ENCODE measurements at regions of chr5 and their contacts with region 1.

Region 1: DNA sequence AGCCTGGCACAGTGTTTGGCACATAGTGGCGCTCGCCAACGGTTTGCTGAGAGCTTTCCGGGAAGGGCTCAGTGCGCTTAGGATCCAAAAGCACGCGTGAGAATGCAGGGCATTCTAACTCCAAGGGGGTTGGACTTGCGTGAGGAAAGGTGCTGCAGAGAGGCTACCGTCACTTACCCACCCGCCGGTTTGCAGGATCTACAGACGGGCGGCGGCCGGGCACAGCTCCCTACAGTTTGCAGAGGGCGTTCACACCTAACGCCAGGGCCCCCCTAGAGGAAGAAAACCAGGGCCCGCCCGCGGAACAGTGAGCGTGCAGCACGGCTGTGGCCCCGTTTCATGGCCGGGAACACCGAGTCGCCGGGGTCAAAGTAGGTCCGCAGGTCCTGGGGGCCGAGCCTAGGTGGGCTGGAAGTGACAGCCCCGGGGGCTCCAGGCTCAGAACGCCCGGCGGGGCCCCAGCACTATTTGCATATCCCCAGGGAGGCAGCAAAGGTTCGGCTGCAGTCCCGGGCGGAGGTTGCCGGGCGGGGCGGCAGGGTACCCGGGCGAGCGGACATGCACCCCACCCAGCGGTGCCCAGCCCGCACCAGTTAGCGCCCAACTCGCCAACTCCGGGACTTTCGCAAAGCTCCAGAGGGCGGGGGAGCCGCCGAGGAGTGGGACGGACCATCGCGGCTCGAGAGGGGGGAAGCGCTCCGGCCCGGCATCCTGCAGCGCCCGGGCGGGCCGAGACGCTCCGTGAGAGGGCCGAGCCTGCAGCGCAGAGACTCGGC is 526 bp upstream of the GALNT10 start:
- DNase-seq: peak; percentile 86 to 91
- ATAC-seq: peak; percentile 93

Region 2: DNA sequence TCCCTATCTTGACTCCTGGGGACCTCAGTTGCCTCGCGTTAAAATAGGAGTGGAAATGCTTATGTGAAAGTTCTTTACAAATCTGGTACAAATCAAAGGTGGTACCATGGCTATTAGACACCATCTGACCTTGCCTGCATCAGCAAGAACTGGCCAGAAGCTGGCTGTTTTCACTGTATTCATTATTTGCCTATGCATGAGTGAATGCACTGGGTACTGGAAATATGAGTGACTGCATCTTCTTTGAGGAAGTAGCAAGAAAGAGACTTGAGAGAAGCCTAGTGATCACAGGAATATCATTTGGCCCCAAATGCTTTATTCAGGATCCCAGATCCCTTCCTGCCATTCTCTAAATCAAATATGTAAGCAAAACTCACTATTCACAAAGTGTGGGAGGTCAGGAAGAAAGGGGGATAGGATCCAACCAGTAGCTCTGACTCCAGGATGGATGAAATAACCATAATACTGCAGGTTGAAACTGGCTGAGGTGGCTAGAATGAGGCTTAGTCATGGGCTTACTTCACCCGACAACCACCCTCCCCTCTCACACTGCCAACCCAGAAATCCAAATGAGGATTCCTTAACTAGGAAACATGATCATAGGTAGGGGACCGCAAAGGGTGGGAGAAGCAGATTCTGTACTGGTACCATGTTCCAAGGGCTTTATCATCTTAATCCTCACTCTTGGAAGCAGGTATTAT is 208.0 kb before region 1 on chr5:
- intact Hi-C with region 1: loop called in 1 of 2 experiments (anchors 10 kb)
- DNase-seq: no peak
- ATAC-seq: no peak

Region 3: GRCh38 chr5:154405078-154405792 is 215.2 kb after region 1 on chr5:
- intact Hi-C with region 1: loop called in 1 of 2 experiments (anchors 10 kb)
- DNase-seq: peak; percentile 71 to 87
- ATAC-seq: peak; percentile 98

Region 4: DNA sequence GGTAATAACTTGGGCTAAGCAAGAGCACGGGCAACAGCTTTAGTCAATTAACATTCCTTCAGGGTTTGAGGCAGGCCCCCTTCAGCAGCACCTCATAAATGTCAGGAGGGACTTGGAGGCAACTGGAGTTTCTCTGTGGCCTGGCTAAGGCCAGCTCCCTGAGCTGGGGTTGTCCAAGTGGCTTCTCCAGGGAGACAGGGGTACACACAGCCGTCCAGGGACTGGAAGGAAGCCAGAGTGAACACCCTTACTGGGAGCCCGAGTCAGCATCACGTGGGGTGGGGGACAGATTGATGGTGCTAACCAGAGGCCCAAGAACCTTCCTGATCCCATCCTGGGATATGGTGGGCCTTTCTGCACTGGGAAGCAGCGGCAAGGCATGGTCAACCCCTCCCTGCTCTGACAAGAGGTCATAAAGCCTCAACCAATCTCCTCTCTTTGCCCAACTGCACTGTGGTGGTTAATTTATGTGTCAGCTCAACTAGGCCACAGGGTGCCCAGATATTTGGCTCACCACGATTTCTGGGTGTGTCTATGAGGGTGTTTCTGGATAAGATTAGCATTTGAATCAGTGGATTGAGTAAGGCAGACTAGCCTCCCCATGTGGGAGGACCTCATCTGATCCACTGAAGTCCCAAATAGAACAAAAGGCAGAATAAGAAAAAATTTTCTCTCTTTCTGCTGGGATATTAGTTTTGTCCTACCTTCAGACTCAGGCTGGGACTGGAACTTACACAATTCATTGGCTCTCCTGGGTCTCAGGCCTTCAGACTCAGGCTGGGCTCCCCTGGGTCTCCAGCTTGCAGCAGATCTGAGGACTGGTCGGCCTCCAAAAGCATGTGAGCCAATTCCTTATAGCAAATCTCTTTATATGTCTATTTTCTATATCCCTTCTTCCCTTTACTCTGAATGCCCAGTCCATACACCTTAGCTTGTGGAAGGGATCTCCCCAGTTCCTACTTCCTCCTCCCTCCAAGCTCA is 438.0 kb after region 1 on chr5:
- intact Hi-C with region 1: no loop called
- DNase-seq: no peak
- ATAC-seq: no peak

Measured in left colon (tissue), 2 donors.